GM13976 (cell line): ENCODE measurements at regions of chr3 and their contacts with region 1.

Region 1: GRCh38 chr3:52339612-52340011 is 23.5 kb downstream of the DNAH1 start:
- DNase-seq: peak; percentile 77
- CTCF ChIP-seq: peak; percentile 48

Region 2: GRCh38 chr3:52238761-52239701 is 100.6 kb before region 1 on chr3 and contains the start of gene TWF2:
- in situ Hi-C with region 1: loop called (anchors 10 kb)
- DNase-seq: peak; percentile 98
- CTCF ChIP-seq: peak; percentile 49